ENCODE measurements at regions of chr2 and their contacts with region 1.

Region 1: DNA sequence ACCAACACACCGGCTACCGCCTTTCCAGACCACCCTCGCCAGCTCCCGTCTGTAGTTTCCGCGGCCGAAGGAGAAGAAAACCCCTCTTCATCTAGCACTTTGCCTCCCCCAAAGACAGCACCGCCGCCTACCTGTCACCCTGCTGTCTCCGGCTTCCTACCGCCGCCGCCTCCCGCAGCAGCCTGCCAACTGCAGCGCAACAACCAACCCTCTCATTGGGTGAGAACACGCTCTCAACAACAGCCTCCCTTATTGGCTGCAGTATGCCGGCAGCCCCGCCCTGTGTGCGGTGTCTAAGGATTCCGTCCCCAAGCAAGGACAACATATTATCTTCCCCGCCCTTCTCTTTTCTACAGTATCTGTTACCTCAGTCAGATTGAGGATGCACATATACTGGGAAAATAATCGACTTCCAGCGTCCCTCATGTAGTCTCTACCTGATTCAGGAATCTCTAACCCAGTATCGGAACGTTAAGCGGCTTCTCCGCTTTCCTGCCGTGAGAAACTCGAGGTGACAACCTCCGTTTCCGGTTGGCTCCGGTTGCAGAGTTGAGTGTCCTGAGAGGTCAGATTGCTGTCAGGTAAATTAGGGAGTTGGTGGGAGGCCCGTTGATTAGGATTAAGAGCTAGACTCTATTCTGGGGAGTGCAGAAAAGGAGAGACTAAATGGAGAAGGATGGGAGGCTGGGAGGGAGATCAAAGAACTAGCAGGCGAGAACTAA is at the starts of genes HYCC2 and NDUFB3:
- DNase-seq: peak; percentile 84
- H3K4me3 ChIP-seq: peak within 1 kb of the TSS; percentile 99
- H3K27ac ChIP-seq: peak within 1 kb of the TSS; percentile 35
- H3K27me3 ChIP-seq: no peaks in the 10 kb centered on the region
- CTCF ChIP-seq: peak; percentile 41
- polyA plus RNA-seq, gene HYCC2: 4.5 and 6.1 TPM in 2 replicates
- polyA plus RNA-seq, gene NDUFB3: 90.9 and 121 TPM in 2 replicates

Region 2: DNA sequence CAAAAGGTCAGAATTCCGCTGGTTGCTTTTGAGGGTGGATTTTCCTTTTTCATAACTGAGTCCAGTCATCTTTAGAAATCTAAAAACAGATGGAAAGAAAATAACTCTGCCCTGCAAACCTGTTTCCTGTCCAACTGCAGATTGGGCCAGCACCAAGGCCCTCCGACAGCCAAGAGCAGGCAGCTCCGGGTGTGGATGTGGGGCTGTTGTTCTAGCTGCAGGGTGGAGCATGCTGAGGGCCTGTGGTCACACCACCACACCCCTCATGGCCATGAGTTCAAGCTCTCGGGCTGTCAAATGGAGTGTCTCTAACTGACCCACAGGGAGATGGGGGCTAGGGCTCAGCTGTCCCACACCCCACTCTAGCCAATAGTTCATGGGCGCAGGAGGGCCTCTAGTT is 329.2 kb before region 1 on chr2:
- CTCF ChIA-PET with region 1: no interaction called
- POLR2A ChIA-PET with region 1: no interaction called
- DNase-seq: no peak
- H3K4me3 ChIP-seq: no peak overlapping the region
- H3K27ac ChIP-seq: no peak overlapping the region
- H3K27me3 ChIP-seq: peaks cover 4% of the 10 kb centered on the region
- CTCF ChIP-seq: no peak

Region 3: GRCh38 chr2:200869014-200869413 is 202.6 kb before region 1 on chr2:
- CTCF ChIA-PET with region 1: no interaction called
- POLR2A ChIA-PET with region 1: no interaction called
- DNase-seq: no peak
- H3K4me3 ChIP-seq: no peak overlapping the region
- H3K27ac ChIP-seq: no peak overlapping the region
- H3K27me3 ChIP-seq: no peaks in the 10 kb centered on the region
- CTCF ChIP-seq: no peak

Region 4: DNA sequence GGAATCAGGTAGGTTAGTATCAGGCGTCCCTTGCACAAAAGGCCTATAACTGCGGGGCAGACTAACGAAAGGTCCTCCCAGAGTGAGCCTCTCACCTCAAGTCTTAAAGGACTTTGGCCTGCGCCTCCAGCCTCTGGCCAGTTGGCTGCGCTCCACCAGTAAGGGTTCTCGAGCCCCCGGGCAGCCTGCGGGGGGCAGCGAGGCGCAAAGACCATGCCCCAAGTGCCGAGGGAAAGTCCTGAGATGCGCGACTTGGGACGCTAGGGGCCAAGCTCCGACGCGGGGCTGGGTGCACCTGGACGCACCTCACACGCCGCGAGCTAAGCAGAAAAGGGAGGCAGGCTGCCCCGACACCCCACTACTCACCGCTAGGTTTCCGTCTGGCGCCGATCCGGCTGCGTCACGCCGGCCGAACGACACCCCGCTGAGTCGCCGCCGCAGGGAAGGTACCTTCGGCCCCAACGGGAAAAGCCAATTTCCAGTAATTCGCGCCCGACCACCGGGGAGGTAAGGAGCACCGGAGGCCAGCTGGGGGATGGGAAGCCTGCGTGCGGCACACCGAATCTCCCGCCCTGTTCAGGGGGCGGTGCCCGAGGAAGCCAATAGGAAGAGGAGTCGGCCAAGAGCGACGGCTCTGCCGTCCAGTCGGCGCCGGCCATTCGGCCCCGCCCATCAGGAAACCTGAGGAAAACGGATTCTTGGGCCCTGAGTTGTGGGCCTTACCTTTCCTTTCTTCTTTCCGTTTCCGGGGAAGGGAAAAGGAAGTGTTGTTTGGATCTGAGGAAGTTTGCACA is 108.3 kb before region 1 on chr2 and contains the start of gene ORC2:
- CTCF ChIA-PET with region 1: interaction called, 41 read pairs
- POLR2A ChIA-PET with region 1: no interaction called
- DNase-seq: peak; percentile 80
- H3K4me3 ChIP-seq: peak within 1 kb of the TSS; percentile 94
- H3K27ac ChIP-seq: peak within 1 kb of the TSS; percentile 62
- H3K27me3 ChIP-seq: no peaks in the 10 kb centered on the region
- CTCF ChIP-seq: peak; percentile 65
- polyA plus RNA-seq, gene ORC2: 4.7 and 4.9 TPM in 2 replicates

Region 5: GRCh38 chr2:201057087-201057521 is 14.5 kb before region 1 on chr2:
- CTCF ChIA-PET with region 1: interaction called, 13 read pairs
- POLR2A ChIA-PET with region 1: no interaction called
- DNase-seq: no peak
- H3K4me3 ChIP-seq: no peak overlapping the region
- H3K27ac ChIP-seq: no peak overlapping the region
- H3K27me3 ChIP-seq: no peaks in the 10 kb centered on the region
- CTCF ChIP-seq: no peak

Region 6: DNA sequence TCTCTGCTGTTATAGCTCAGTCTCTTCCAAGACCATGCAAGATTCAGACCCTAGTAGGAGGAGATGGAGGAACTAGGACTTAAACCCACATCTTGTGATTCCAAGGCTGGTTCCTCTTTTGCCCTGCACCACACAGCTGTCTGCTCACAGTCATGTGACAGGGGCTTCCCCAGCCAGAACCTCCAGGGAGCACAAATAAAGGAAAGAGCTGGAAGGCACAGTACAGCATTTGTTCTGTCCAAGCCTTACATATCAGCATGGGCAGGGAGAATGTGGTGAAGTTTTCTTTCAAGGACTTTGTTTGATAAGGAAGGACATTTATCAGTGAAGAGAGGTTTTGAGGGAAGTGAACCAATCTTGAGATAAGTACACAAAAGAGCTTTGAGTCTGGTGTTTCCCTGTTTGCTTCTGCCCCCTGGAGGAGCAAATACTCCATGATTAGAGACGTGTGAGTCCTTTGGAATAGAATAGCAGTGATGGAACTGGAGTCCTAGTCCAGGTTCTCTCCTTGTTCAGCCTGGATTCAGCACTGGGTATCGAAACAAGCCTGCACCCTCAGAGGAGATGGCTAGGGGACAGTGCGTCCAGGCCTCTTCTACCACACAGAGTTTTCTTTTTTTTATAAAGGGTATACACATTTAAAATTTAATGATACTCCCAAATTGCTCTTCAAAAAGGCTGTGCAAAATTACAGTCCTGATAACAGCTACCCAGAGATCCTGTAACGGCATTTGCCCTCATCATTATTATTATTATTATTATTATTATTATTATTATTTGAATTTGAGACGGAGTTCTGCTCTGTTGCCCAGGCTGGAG is 86.7 kb after region 1 on chr2:
- CTCF ChIA-PET with region 1: interaction called, 20 read pairs
- POLR2A ChIA-PET with region 1: no interaction called
- DNase-seq: no peak
- H3K4me3 ChIP-seq: no peak overlapping the region
- H3K27ac ChIP-seq: peak overlapping the region; percentile 33
- H3K27me3 ChIP-seq: no peaks in the 10 kb centered on the region
- CTCF ChIP-seq: peak; percentile 83

Region 7: DNA sequence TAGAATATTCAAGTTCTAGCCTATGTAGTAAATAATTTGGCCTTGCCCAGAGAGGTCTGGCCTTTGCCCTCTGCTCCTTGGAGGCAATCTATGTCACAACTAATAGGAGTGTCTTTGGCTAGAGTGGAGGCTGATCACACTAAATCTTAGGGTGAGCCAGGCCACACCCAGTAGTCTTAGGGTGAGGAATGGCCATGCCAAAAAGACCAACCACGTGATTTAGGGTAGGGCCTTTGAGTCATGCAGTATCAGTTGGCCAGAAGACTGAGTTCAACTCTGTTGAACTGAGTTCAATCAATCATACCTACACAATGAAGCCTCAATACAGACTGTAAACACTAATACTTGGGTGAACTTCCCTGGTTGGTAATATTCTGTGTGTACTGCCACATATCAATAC is 311.5 kb after region 1 on chr2:
- CTCF ChIA-PET with region 1: no interaction called
- POLR2A ChIA-PET with region 1: no interaction called
- DNase-seq: no peak
- H3K4me3 ChIP-seq: no peak overlapping the region
- H3K27ac ChIP-seq: no peak overlapping the region
- H3K27me3 ChIP-seq: no peaks in the 10 kb centered on the region
- CTCF ChIP-seq: no peak

Measured in AG04450 (cell line).